ENCODE measurements at regions of chr2 and their contacts with region 1.

Region 1: DNA sequence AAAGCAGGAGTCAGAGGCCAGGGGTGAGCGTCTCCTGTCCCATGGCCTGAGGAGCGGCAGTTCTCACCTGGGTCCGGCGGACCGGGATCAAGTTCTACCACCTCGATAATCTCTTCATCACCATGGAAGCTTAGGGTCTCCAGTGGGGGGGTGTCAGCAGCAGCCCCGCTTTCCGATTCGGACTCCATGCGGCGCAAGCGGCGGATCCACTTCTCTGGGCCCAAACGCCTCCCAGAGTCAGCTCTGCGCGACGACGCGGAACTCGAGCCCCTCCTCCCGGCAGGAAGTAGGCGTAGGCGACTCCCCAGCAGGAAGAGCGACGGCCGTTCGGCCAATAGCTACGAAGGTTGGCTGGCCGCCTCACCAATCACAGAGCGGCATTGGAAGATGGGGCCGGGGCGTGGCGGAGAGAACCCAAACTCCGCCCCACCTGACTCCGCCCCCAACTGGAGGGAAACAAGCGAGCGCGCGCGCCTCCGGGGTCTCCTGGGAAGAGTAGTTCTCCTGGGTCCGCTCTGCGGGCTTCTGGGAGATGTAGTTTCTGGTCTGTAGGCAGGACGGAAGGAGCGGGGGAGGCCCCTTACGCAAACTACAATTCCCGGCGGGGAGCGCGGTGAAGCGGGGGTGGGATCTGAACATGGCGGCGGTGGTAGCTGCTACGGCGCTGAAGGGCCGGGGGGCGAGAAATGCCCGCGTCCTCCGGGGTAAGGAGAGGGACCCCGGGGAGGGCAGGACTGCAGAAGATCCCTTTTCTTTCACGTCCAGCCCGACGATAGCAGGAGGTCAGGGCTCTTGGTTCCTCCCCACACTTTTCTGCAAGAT is at the starts of genes AAMP and PNKD:
- DNase-seq: peak; percentile 98

Region 2: DNA sequence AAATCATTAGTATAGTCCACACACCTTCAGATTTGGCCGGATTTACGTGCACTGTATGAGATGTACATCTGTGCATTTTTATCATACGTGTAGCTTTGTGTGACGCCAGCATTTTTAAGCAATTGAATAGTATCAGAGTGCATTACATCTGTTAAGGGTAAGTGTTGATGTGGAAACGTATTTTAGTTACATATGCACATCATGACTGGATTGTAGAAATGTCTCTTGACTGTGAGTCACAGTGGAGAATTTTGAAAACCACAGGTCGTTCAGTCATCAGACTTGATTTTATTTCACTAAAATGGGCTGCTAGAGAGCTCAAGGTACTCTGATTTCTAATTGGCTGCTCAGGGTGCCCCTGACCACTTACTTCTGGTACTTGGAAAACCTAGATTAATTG is 14.7 kb before region 1 on chr2:
- CTCF ChIA-PET with region 1: interaction called, 4 read pairs
- POLR2A ChIA-PET with region 1: interaction called, 11 read pairs
- DNase-seq: no peak

Region 3: GRCh38 chr2:218286570-218287459 is 16.7 kb after region 1 on chr2:
- CTCF ChIA-PET with region 1: interaction called, 30 read pairs
- POLR2A ChIA-PET with region 1: interaction called, 22 read pairs
- DNase-seq: peak; percentile 43

Region 4: GRCh38 chr2:218292048-218293014 is 22.2 kb after region 1 on chr2 and contains the start of gene TMBIM1:
- CTCF ChIA-PET with region 1: interaction called, 30 read pairs
- POLR2A ChIA-PET with region 1: interaction called, 22 read pairs
- DNase-seq: peak; percentile 91

Region 5: GRCh38 chr2:218395797-218396687 is 125.9 kb after region 1 on chr2:
- CTCF ChIA-PET with region 1: interaction called, 3 read pairs
- POLR2A ChIA-PET with region 1: interaction called, 12 read pairs
- DNase-seq: peak; percentile 80